Naive thymus-derived CD4-positive, alpha-beta T cell (primary cell): ENCODE measurements at regions of chr4 and their contacts with region 1.

Region 1: DNA sequence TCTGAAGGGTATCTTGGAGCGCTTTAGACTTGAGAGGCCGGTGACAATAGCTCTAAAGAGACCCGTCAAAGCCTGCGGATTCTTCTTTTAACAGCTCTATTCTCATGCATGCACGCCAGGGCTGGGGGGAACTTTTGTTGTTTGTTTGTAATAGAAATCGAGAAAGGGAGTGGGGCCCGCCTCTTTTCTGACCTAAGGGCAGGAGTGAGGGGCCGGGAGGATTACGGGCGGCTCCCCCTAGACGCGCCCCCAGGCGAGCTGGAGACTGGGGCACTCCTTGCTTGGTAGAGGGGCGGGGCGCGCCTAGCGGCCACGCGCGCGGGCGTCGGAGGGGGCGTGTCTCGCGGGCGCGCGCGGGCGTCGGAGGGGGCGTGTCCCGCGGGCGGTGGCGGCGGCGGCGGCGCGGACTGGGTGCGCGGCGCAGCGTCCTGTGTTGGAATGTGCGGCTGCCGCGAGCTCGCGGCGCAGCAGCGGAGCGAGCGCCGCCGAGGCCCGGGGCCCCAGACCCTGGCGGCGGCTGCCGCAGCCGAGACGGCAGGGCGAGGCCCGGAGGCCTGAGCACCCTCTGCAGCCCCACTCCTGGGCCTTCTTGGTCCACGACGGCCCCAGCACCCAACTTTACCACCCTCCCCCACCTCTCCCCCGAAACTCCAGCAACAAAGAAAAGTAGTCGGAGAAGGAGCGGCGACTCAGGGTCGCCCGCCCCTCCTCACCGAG is at the start of gene REST:
- DNase-seq: peak; percentile 80 to 95 (median 88)
- ATAC-seq: peak; percentile 89
- H3K4me3 ChIP-seq: peak within 1 kb of the TSS; percentile 92
- H3K4me3 Mint-ChIP-seq: peak within 1 kb of the TSS; percentile 90 to 98 (median 96)
- H3K27ac ChIP-seq: peak within 1 kb of the TSS; percentile 80
- H3K27ac Mint-ChIP-seq: peak within 1 kb of the TSS; percentile 85 to 99 (median 93)
- H3K4me1 ChIP-seq: peaks cover 26 to 33% of the 10 kb centered on the region in 2 donors
- H3K4me1 Mint-ChIP-seq: peaks cover 35 to 53% (median 44%) of the 10 kb centered on the region in 7 donors
- H3K27me3 ChIP-seq: no peaks in the 10 kb centered on the region
- H3K27me3 Mint-ChIP-seq: peaks cover 0 to 13% (median 0%) of the 10 kb centered on the region in 5 donors
- total RNA-seq, gene REST: 55.7 to 86.4 (median 72.8) TPM

Region 2: DNA sequence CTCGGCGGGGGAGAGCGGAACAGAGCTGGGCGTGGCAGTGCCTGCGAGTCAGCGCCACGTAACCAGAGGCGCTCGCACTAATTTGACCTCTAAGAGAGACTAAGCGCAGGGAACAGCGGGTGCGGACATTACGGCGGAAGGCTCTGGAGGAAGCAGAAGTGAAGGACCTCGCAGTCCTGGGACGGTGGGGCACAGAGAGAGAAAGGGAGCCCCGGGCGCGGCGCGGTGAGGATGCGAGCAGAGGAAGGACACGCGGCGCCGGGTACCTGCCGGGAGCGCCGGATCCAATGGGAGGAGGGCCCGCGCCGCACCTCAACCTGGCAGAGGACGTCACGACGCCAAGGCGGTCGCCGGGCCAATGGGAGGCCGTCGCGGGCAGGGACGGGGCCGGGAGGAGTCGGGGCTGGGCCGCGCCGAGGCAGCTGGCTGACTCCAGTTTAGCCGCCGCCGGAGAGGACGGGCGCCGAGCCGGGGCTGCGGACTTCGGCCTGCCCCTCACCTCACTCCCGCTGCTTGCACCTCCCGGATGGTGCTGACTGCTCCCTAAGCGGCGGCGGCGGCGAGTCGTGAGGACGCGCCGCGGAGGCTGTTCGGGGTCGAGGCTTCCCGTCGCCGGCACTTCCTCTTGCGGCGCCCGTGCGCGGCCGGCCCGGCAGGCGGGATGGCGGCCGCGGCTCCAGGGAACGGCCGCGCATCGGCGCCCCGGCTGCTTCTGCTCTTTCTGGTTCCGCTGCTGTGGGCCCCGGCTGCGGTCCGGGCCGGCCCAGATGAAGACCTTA is 1511.9 kb before region 1 on chr4 and contains the start of gene TMEM165:
- CTCF ChIA-PET with region 1: no interaction called
- POLR2A ChIA-PET with region 1: no interaction called
- intact Hi-C with region 1: loop called (anchors 5 kb)
- DNase-seq: peak; percentile 77 to 92 (median 87)
- ATAC-seq: peak; percentile 94
- H3K4me3 ChIP-seq: peak within 1 kb of the TSS; percentile 88
- H3K4me3 Mint-ChIP-seq: peak within 1 kb of the TSS; percentile 94 to 99 (median 96)
- H3K27ac ChIP-seq: peak within 1 kb of the TSS; percentile 89
- H3K27ac Mint-ChIP-seq: peak within 1 kb of the TSS; percentile 89 to 99 (median 96)
- H3K4me1 ChIP-seq: peaks cover 27 to 31% of the 10 kb centered on the region in 2 donors
- H3K4me1 Mint-ChIP-seq: peaks cover 29 to 49% (median 39%) of the 10 kb centered on the region in 7 donors
- H3K27me3 ChIP-seq: no peaks in the 10 kb centered on the region
- H3K27me3 Mint-ChIP-seq: no peaks in the 10 kb centered on the region
- total RNA-seq, gene TMEM165: 53.1 to 80.9 (median 58.9) TPM

Region 3: GRCh38 chr4:56387023-56388001 is 520.3 kb before region 1 on chr4 and contains the start of gene AASDH:
- CTCF ChIA-PET with region 1: no interaction called
- POLR2A ChIA-PET with region 1: interaction called, 13 read pairs
- intact Hi-C with region 1: loop called (anchors 1 kb)
- DNase-seq: peak; percentile 92 to 98 (median 94)
- ATAC-seq: peak; percentile 95
- H3K4me3 ChIP-seq: peak within 1 kb of the TSS; percentile 94
- H3K4me3 Mint-ChIP-seq: peak within 1 kb of the TSS; percentile 87 to 99 (median 96)
- H3K27ac ChIP-seq: peak within 1 kb of the TSS; percentile 92
- H3K27ac Mint-ChIP-seq: peak within 1 kb of the TSS; percentile 97 to 100 (median 98)
- H3K4me1 ChIP-seq: peaks cover 15 to 18% of the 10 kb centered on the region in 2 donors
- H3K4me1 Mint-ChIP-seq: peaks cover 19 to 60% (median 47%) of the 10 kb centered on the region in 7 donors
- H3K27me3 ChIP-seq: no peaks in the 10 kb centered on the region
- H3K27me3 Mint-ChIP-seq: no peaks in the 10 kb centered on the region
- total RNA-seq, gene AASDH: 10.2 to 24.7 (median 15.8) TPM

Region 4: DNA sequence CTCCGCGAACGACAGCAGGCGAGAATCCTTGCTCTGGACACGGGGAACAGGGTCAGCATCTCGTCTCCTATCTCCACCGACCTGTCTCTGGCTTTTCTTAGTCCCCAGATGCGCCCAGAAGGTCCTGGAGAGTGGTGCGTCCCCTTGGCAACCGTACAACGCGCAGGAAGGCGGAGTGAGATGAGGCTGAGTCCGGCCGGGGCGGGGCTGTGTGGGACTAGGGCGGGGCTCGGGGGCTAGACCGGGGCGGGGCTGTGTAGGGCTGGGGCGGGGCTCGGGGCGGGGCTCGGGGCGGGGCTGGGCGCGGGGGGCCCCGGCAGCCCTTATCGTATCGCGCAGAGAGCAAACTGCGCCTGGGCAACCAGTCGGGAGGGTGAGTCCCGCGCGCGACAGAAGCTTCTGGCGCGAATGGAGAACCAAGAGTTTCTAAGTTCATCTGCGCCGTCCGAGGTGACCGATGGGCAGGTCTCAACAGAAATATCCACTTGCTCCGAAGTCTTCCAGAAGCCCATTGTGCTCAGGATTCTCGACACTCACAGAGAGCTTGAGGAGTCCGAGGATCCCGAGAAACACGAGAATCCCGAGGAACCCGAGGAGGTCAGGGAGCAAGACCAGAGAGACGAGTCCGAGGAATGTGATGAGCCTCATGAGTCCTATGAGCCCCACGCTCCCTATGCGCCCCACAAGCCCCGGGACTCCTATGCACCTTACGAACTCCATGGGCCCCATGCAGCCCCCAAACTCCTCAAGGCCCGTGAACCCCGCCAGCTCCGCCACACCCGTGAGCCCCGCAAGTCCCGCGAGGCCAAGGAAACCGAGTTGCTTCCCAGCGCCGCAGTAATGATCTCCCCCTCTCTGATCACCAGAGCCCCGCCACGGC is 377.1 kb before region 1 on chr4:
- CTCF ChIA-PET with region 1: no interaction called
- POLR2A ChIA-PET with region 1: no interaction called
- intact Hi-C with region 1: loop called (anchors 1 to 5 kb)
- DNase-seq: peak; percentile 53 to 75 (median 59)
- ATAC-seq: peak; percentile 99
- H3K4me3 ChIP-seq: peak overlapping the region; percentile 91
- H3K4me3 Mint-ChIP-seq: peak overlapping the region in 1 of 10 donors; percentile 70
- H3K27ac ChIP-seq: peak overlapping the region; percentile 44
- H3K27ac Mint-ChIP-seq: peak overlapping the region in 3 of 9 donors; percentile 26 to 55 (median 38)
- H3K4me1 ChIP-seq: peaks cover 0 to 4% of the 10 kb centered on the region in 2 donors
- H3K4me1 Mint-ChIP-seq: peaks cover 0 to 2% (median 0%) of the 10 kb centered on the region in 7 donors
- H3K27me3 ChIP-seq: peaks cover 0 to 4% of the 10 kb centered on the region in 2 donors
- H3K27me3 Mint-ChIP-seq: peaks cover 0 to 22% (median 7%) of the 10 kb centered on the region in 5 donors

Region 5: GRCh38 chr4:56799824-56800756 is 107.6 kb before region 1 on chr4:
- CTCF ChIA-PET with region 1: no interaction called
- POLR2A ChIA-PET with region 1: no interaction called
- intact Hi-C with region 1: loop called in 1 of 2 experiments (anchors 5 kb)
- DNase-seq: peak; percentile 57 to 88 (median 81)
- ATAC-seq: peak; percentile 99
- H3K4me3 ChIP-seq: peak overlapping the region; percentile 56
- H3K4me3 Mint-ChIP-seq: peak overlapping the region; percentile 91 to 100 (median 94)
- H3K27ac ChIP-seq: peak overlapping the region; percentile 72
- H3K27ac Mint-ChIP-seq: peak overlapping the region; percentile 40 to 96 (median 92)
- H3K4me1 ChIP-seq: peaks cover 0 to 2% of the 10 kb centered on the region in 2 donors
- H3K4me1 Mint-ChIP-seq: peaks cover 5 to 33% (median 22%) of the 10 kb centered on the region in 7 donors
- H3K27me3 ChIP-seq: no peaks in the 10 kb centered on the region
- H3K27me3 Mint-ChIP-seq: peaks cover 0 to 28% (median 0%) of the 10 kb centered on the region in 5 donors

Region 6: DNA sequence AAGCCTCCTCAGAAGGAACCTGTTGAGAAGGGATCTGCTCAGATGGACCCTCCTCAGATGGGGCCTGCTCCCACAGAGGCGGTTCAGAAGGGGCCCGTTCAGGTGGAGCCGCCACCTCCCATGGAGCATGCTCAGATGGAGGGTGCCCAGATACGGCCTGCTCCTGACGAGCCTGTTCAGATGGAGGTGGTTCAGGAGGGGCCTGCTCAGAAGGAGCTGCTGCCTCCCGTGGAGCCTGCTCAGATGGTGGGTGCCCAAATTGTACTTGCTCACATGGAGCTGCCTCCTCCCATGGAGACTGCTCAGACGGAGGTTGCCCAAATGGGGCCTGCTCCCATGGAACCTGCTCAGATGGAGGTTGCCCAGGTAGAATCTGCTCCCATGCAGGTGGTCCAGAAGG is 23.0 kb after region 1 on chr4:
- CTCF ChIA-PET with region 1: interaction called, 3 read pairs
- POLR2A ChIA-PET with region 1: interaction called, 3 read pairs
- intact Hi-C with region 1: loop called in 1 of 2 experiments (anchors 2 kb)
- DNase-seq: no peak
- ATAC-seq: no peak
- H3K4me3 ChIP-seq: no peak overlapping the region
- H3K4me3 Mint-ChIP-seq: peak overlapping the region in 1 of 10 donors; percentile 39
- H3K27ac ChIP-seq: no peak overlapping the region
- H3K27ac Mint-ChIP-seq: peak overlapping the region in 3 of 9 donors; percentile 41 to 58 (median 45)
- H3K4me1 ChIP-seq: no peaks in the 10 kb centered on the region
- H3K4me1 Mint-ChIP-seq: peaks cover 22 to 56% (median 47%) of the 10 kb centered on the region in 7 donors
- H3K27me3 ChIP-seq: no peaks in the 10 kb centered on the region
- H3K27me3 Mint-ChIP-seq: no peaks in the 10 kb centered on the region

Region 7: DNA sequence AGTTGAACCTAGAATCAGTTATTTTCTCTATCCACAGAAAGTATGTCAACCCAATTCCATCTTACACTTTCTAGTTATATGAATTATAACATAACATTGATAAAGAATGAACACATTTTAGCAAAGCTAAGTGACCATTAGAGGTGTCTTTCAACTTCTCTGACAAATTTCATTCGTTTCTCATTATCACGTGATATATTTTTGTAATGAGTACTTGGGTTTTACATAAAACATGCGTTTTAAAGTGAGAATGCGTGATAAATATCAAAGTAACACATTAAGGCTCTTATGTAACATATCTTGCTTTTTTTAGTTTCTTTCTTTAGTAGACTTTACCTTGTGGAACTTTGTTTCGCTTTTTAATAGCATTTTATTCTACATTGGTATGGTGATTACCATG is 1917.6 kb after region 1 on chr4:
- CTCF ChIA-PET with region 1: no interaction called
- POLR2A ChIA-PET with region 1: no interaction called
- intact Hi-C with region 1: no loop called
- DNase-seq: no peak
- ATAC-seq: no peak
- H3K4me3 ChIP-seq: no peak overlapping the region
- H3K4me3 Mint-ChIP-seq: no peak overlapping the region
- H3K27ac ChIP-seq: no peak overlapping the region
- H3K27ac Mint-ChIP-seq: no peak overlapping the region
- H3K4me1 ChIP-seq: no peaks in the 10 kb centered on the region
- H3K4me1 Mint-ChIP-seq: no peaks in the 10 kb centered on the region
- H3K27me3 ChIP-seq: no peaks in the 10 kb centered on the region
- H3K27me3 Mint-ChIP-seq: no peaks in the 10 kb centered on the region